ENCODE measurements at regions of chr5 and their contacts with region 1.

Region 1: GRCh38 chr5:141412854-141413539 is at the start of gene PCDHGA10:
- DNase-seq: peak; percentile 73
- total RNA-seq, gene PCDHGA10: 5.7 to 6.6 TPM

Region 2: GRCh38 chr5:141557681-141558136 is 144.7 kb after region 1 on chr5:
- intact Hi-C with region 1: loop called (anchors 10 kb)
- DNase-seq: peak; percentile 94

Region 3: GRCh38 chr5:141564216-141564692 is 151.3 kb after region 1 on chr5:
- intact Hi-C with region 1: loop called (anchors 10 kb)
- DNase-seq: no peak

Measured in posterior vena cava (tissue), 2 donors.